SK-N-SH (cell line): ENCODE measurements at regions of chr7 and their contacts with region 1.

Region 1: GRCh38 chr7:113421696-113422330 is 303.5 kb upstream of the SMIM30 start:
- DNase-seq: peak; percentile 64
- H3K4me3 ChIP-seq: no peak overlapping the region; a peak in 1 of 4 replicates
- H3K27ac ChIP-seq: no peak overlapping the region
- H3K4me1 ChIP-seq: peaks cover 0 to 2% of the 10 kb centered on the region in 2 experiments; a peak in 1 of 4 replicates
- H3K27me3 ChIP-seq: no peaks in the 10 kb centered on the region
- CTCF ChIP-seq: peak; percentile 97
- EP300 ChIP-seq: no peak
- RAD21 ChIP-seq: peak; percentile 98

Region 2: DNA sequence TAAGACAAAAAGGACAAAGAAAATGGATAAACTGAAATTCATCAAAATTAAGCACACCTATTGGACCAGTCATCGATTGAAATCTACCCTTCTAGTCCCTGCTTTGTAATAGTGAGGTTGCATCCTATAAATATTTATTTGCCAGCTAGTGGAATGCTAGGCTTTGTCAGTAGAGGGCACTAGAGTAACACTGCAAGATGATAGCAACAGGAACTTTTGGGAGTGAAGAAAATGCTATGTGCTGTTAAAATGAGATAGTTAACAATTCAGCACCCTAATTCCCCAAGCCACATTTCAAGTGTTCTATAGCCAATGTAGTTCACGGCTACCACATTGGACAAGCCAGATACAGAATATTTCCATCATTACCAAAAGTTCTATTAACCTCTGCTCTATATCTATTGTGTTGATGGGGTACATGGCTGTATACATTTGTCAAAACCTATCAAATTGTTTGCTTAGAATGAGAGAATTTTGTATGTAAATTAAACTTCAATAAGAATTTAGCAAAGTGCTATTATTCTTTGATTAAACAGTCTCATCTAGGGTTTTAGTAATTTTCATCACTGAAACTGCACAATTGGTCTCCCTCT is 871.2 kb before region 1 on chr7:
- CTCF ChIA-PET with region 1: interaction called, 42 read pairs
- POLR2A ChIA-PET with region 1: no interaction called
- DNase-seq: peak; percentile 74
- H3K4me3 ChIP-seq: no peak overlapping the region
- H3K27ac ChIP-seq: no peak overlapping the region
- H3K4me1 ChIP-seq: no peaks in the 10 kb centered on the region
- H3K27me3 ChIP-seq: no peaks in the 10 kb centered on the region
- CTCF ChIP-seq: peak; percentile 100
- EP300 ChIP-seq: no peak
- RAD21 ChIP-seq: peak; percentile 99

Region 3: GRCh38 chr7:113015032-113015645 is 406.7 kb before region 1 on chr7:
- CTCF ChIA-PET with region 1: interaction called, 44 read pairs
- POLR2A ChIA-PET with region 1: no interaction called
- DNase-seq: peak; percentile 55
- H3K4me3 ChIP-seq: no peak overlapping the region
- H3K27ac ChIP-seq: no peak overlapping the region
- H3K4me1 ChIP-seq: no peaks in the 10 kb centered on the region; a peak in 2 of 4 replicates
- H3K27me3 ChIP-seq: no peaks in the 10 kb centered on the region
- CTCF ChIP-seq: peak; percentile 90
- EP300 ChIP-seq: no peak
- RAD21 ChIP-seq: peak; percentile 84

Region 4: GRCh38 chr7:113289140-113289740 is 132.6 kb before region 1 on chr7:
- CTCF ChIA-PET with region 1: interaction called, 10 read pairs
- POLR2A ChIA-PET with region 1: no interaction called
- DNase-seq: peak; percentile 42
- H3K4me3 ChIP-seq: no peak overlapping the region
- H3K27ac ChIP-seq: no peak overlapping the region
- H3K4me1 ChIP-seq: no peaks in the 10 kb centered on the region
- H3K27me3 ChIP-seq: no peaks in the 10 kb centered on the region
- CTCF ChIP-seq: peak; percentile 84
- EP300 ChIP-seq: no peak
- RAD21 ChIP-seq: peak; percentile 90

Region 5: GRCh38 chr7:113404245-113404644 is 17.6 kb before region 1 on chr7:
- CTCF ChIA-PET with region 1: interaction called, 38 read pairs
- POLR2A ChIA-PET with region 1: no interaction called
- DNase-seq: peak; percentile 19
- H3K4me3 ChIP-seq: no peak overlapping the region
- H3K27ac ChIP-seq: no peak overlapping the region
- H3K4me1 ChIP-seq: peaks cover 0 to 2% of the 10 kb centered on the region in 2 experiments; a peak in 1 of 4 replicates
- H3K27me3 ChIP-seq: no peaks in the 10 kb centered on the region
- CTCF ChIP-seq: peak; percentile 48
- EP300 ChIP-seq: no peak
- RAD21 ChIP-seq: peak; percentile 41